ENCODE measurements at regions of chr20 and their contacts with region 1.

Region 1: GRCh38 chr20:16666272-16666671 is 63.6 kb upstream of the SNRPB2 start:
- DNase-seq: no peak
- ATAC-seq: no peak
- H3K4me3 ChIP-seq: no peak overlapping the region
- H3K4me3 Mint-ChIP-seq: no peak overlapping the region
- H3K27ac ChIP-seq: no peak overlapping the region
- H3K27ac Mint-ChIP-seq: no peak overlapping the region
- H3K4me1 ChIP-seq: no peaks in the 10 kb centered on the region
- H3K4me1 Mint-ChIP-seq: no peaks in the 10 kb centered on the region
- H3K27me3 ChIP-seq: no peaks in the 10 kb centered on the region
- H3K27me3 Mint-ChIP-seq: peaks cover 4% of the 10 kb centered on the region
- CTCF ChIP-seq: no peak

Region 2: GRCh38 chr20:15100506-15101160 is 1565.6 kb before region 1 on chr20:
- CTCF ChIA-PET with region 1: no interaction called
- POLR2A ChIA-PET with region 1: no interaction called
- intact Hi-C with region 1: no loop called
- DNase-seq: no peak
- ATAC-seq: no peak
- H3K4me3 ChIP-seq: no peak overlapping the region
- H3K4me3 Mint-ChIP-seq: no peak overlapping the region
- H3K27ac ChIP-seq: no peak overlapping the region
- H3K27ac Mint-ChIP-seq: no peak overlapping the region
- H3K4me1 ChIP-seq: no peaks in the 10 kb centered on the region
- H3K4me1 Mint-ChIP-seq: no peaks in the 10 kb centered on the region
- H3K27me3 ChIP-seq: no peaks in the 10 kb centered on the region
- H3K27me3 Mint-ChIP-seq: no peaks in the 10 kb centered on the region
- CTCF ChIP-seq: no peak

Region 3: GRCh38 chr20:16678779-16679178 is 12.5 kb after region 1 on chr20:
- CTCF ChIA-PET with region 1: interaction called, 4 read pairs
- POLR2A ChIA-PET with region 1: no interaction called
- intact Hi-C with region 1: loop called in 1 of 2 experiments (anchors 1 kb)
- DNase-seq: no peak
- ATAC-seq: no peak
- H3K4me3 ChIP-seq: no peak overlapping the region
- H3K4me3 Mint-ChIP-seq: no peak overlapping the region
- H3K27ac ChIP-seq: no peak overlapping the region
- H3K27ac Mint-ChIP-seq: no peak overlapping the region
- H3K4me1 ChIP-seq: no peaks in the 10 kb centered on the region
- H3K4me1 Mint-ChIP-seq: no peaks in the 10 kb centered on the region
- H3K27me3 ChIP-seq: no peaks in the 10 kb centered on the region
- H3K27me3 Mint-ChIP-seq: peaks cover 3% of the 10 kb centered on the region
- CTCF ChIP-seq: no peak